ENCODE measurements at regions of chr15 and their contacts with region 1.

Region 1: GRCh38 chr15:60326824-60327654 is 70.7 kb downstream of the ANXA2 start:
- DNase-seq: peak; percentile 40
- H3K4me3 ChIP-seq: no peak overlapping the region; a peak in 1 of 4 replicates
- H3K27ac ChIP-seq: no peak overlapping the region
- H3K4me1 ChIP-seq: peaks cover 0 to 9% of the 10 kb centered on the region in 2 experiments; a peak in 2 of 4 replicates
- H3K27me3 ChIP-seq: peaks cover 28% of the 10 kb centered on the region; the same call in 1 of the 2 replicates
- CTCF ChIP-seq: peak; percentile 95
- EP300 ChIP-seq: no peak
- RAD21 ChIP-seq: peak; percentile 96

Region 2: DNA sequence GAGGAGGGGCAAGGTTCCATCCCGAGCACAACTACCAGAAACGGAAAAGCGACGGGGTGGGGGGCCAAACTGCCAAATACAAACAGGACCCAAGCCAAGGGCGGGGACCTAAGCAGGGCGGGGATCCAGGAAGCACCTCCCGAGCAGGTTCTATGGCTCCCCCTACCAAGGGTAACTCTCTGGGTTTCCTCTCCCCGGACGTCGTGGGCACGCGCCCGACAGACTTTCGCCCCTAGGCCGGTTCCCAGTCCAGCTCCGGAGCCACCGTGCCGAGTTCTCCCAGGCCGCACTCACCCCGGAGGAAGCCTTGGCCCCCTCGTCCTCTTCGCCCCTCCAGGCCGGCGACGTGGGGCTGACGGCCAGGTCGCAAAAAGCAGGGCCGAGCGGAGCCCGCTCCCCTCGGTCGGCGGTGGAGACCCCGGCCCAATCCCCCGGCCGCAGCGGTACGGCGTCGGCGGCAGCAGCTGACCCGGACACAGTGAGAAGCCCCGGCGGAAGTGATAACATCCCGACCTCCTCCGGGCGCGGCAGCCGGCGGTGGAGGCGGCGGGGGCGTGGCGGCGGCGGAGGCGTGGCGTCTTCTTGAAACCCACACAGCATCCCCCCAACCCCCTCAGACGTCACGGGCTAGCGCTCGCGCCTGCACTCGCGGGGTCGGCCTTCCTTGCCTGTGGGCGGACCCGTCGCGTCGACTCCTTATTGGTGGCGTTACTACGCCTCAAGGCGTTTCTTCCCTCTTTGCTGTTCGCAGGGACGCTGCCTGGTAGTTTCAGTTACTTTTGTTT is 638.0 kb before region 1 on chr15 and contains the start of gene BNIP2:
- CTCF ChIA-PET with region 1: interaction called, 32 read pairs
- POLR2A ChIA-PET with region 1: no interaction called
- DNase-seq: peak; percentile 96
- H3K4me3 ChIP-seq: peak within 1 kb of the TSS; percentile 81 to 86
- H3K27ac ChIP-seq: peak within 1 kb of the TSS; percentile 92 to 93
- H3K4me1 ChIP-seq: peaks cover 16 to 22% of the 10 kb centered on the region in 2 experiments; a peak in 3 of 4 replicates
- H3K27me3 ChIP-seq: no peaks in the 10 kb centered on the region
- CTCF ChIP-seq: 0 out of 2 replicates have a peak, but pooled peaks have one; percentile 6
- EP300 ChIP-seq: 0 out of 4 replicates have a peak, but pooled peaks of 1 of the 2 experiments have one; percentile 26
- RAD21 ChIP-seq: no peak
- polyA plus RNA-seq, gene BNIP2: 37.0 and 67.7 TPM in 2 replicates

Region 3: DNA sequence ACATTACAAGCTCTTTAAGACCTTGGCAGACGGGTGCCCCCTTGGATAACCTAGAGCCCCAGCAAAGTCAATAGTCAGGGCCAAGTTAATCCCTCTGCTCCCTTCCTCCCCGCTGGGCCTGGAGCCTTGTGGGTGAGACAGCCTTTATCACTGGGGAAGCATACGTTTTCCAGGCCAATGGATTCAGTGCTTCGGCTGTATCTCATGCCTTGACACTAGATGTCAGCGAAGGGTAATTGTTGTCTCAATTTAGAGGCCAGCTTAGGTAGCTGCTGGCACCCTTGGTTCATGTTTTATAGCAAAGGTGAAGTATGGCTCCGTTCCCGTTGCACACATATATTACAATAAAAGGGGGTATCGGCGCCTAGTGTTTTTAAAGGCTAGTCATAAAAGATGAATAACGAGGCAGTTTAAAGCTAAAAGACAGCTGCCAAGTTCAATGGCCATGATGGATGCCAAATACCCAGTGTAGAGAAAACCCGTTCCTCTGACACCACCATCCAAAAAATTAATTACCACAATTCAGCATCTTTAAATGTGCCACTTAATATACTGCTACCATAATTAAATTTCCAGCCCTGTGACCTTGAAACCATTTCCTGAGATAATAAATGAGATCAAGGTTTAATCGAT is 585.6 kb before region 1 on chr15:
- CTCF ChIA-PET with region 1: interaction called, 12 read pairs
- POLR2A ChIA-PET with region 1: no interaction called
- DNase-seq: peak; percentile 52
- H3K4me3 ChIP-seq: no peak overlapping the region
- H3K27ac ChIP-seq: no peak overlapping the region
- H3K4me1 ChIP-seq: no peaks in the 10 kb centered on the region; a peak in 1 of 4 replicates
- H3K27me3 ChIP-seq: no peaks in the 10 kb centered on the region; the same call in 1 of the 2 replicates
- CTCF ChIP-seq: no peak
- EP300 ChIP-seq: no peak
- RAD21 ChIP-seq: peak; percentile 73

Region 4: GRCh38 chr15:60315878-60316277 is 11.2 kb before region 1 on chr15:
- CTCF ChIA-PET with region 1: interaction called, 57 read pairs
- POLR2A ChIA-PET with region 1: no interaction called
- DNase-seq: no peak
- H3K4me3 ChIP-seq: no peak overlapping the region
- H3K27ac ChIP-seq: no peak overlapping the region
- H3K4me1 ChIP-seq: no peaks in the 10 kb centered on the region
- H3K27me3 ChIP-seq: peaks cover 9% of the 10 kb centered on the region; the same call in 1 of the 2 replicates
- CTCF ChIP-seq: no peak
- EP300 ChIP-seq: no peak
- RAD21 ChIP-seq: no peak

Region 5: DNA sequence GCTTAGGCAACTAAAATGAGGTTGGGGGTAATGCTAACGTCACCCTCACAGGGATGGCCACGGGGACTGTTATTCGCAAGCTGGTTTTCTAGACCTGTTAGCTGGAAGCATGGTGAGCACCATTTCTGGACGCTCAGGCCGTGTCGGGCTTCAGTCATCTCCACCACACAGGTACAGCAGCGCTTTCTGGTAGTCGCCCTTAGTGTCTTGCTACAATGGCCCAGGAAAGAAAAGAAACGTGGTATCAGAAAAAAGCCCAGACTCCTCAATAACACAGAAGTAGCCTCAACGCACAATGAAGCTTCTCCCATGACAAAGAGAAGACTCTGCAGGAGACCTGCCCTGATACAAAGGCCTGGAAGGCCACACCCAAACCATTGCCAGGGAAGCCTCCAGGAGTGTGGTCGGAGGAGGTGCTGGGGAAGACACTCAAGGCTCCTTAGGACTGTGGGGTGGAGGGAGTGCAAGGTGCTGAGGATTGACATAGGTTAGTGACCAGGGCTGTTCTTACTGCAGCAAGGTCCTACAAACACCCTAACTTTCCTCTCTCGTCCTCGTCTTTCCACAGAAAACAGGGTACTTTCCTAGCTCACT is 20.5 kb after region 1 on chr15:
- CTCF ChIA-PET with region 1: interaction called, 31 read pairs
- POLR2A ChIA-PET with region 1: no interaction called
- DNase-seq: no peak
- H3K4me3 ChIP-seq: no peak overlapping the region
- H3K27ac ChIP-seq: peak overlapping the region in 1 of 2 experiments; percentile 49; a peak in 2 of 4 replicates
- H3K4me1 ChIP-seq: peaks cover 4 to 9% of the 10 kb centered on the region in 2 experiments; a peak in 2 of 4 replicates
- H3K27me3 ChIP-seq: no peaks in the 10 kb centered on the region
- CTCF ChIP-seq: no peak
- EP300 ChIP-seq: no peak
- RAD21 ChIP-seq: no peak

Region 6: GRCh38 chr15:60444289-60444912 is 117.4 kb after region 1 on chr15:
- CTCF ChIA-PET with region 1: interaction called, 10 read pairs
- POLR2A ChIA-PET with region 1: no interaction called
- DNase-seq: peak; percentile 10
- H3K4me3 ChIP-seq: no peak overlapping the region
- H3K27ac ChIP-seq: peak overlapping the region in 1 of 2 experiments; percentile 19; a peak in 1 of 4 replicates
- H3K4me1 ChIP-seq: peaks cover 5 to 6% of the 10 kb centered on the region in 2 experiments; a peak in 3 of 4 replicates
- H3K27me3 ChIP-seq: no peaks in the 10 kb centered on the region
- CTCF ChIP-seq: peak; percentile 82
- EP300 ChIP-seq: no peak
- RAD21 ChIP-seq: peak; percentile 68

Region 7: GRCh38 chr15:60643555-60643954 is 316.5 kb after region 1 on chr15:
- CTCF ChIA-PET with region 1: no interaction called
- POLR2A ChIA-PET with region 1: no interaction called
- DNase-seq: no peak
- H3K4me3 ChIP-seq: no peak overlapping the region
- H3K27ac ChIP-seq: no peak overlapping the region
- H3K4me1 ChIP-seq: no peaks in the 10 kb centered on the region
- H3K27me3 ChIP-seq: no peaks in the 10 kb centered on the region
- CTCF ChIP-seq: no peak
- EP300 ChIP-seq: no peak
- RAD21 ChIP-seq: no peak

Region 8: GRCh38 chr15:60660290-60661051 is 333.4 kb after region 1 on chr15:
- CTCF ChIA-PET with region 1: no interaction called
- POLR2A ChIA-PET with region 1: no interaction called
- DNase-seq: peak; percentile 35
- H3K4me3 ChIP-seq: no peak overlapping the region
- H3K27ac ChIP-seq: peak overlapping the region; percentile 51 to 86
- H3K4me1 ChIP-seq: peaks cover 11 to 17% of the 10 kb centered on the region in 2 experiments
- H3K27me3 ChIP-seq: no peaks in the 10 kb centered on the region
- CTCF ChIP-seq: no peak
- EP300 ChIP-seq: peak in 1 of 2 experiments; percentile 75; a peak in 1 of 4 replicates
- RAD21 ChIP-seq: 0 out of 2 replicates have a peak, but pooled peaks have one; percentile 11

Region 9: DNA sequence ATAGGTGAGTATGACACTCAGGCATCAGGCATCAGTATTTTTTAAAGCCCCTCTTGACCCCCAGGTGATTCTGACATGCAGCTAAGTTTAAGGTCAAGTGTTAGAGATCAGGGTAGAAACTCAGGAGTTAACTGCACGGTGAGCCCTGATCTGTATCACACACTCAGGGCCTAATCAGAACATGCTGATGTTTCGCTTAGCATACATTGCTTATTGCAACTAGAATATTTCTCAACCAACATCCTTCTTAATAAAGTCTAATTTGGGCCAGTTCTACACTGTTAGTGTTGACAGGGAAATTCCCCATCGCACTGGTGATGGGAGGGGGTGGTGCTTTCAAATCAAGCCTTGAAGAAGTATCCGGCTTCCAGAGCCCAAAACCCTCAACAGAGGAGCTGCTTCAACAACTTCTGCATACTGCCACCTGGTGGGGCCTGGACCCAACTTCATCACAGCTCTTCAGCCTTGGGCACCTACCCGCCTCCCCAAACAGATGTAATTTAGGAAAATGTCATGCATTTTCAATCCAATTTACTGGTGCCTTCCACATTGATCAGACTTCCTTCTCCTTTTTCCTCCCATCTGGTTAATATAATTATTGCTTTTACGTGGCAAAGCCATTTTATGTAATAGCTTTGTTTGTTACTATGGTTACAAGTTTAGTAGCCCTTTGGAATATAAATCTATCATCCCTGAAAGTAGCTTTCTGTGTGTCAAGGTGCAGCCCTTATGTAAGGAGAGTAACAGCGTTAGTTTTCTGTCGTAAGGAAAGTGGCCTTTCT is 589.8 kb after region 1 on chr15:
- CTCF ChIA-PET with region 1: no interaction called
- POLR2A ChIA-PET with region 1: no interaction called
- DNase-seq: peak; percentile 73
- H3K4me3 ChIP-seq: no peak overlapping the region; a peak in 1 of 4 replicates
- H3K27ac ChIP-seq: no peak overlapping the region
- H3K4me1 ChIP-seq: peaks cover 0 to 4% of the 10 kb centered on the region in 2 experiments; a peak in 1 of 4 replicates
- H3K27me3 ChIP-seq: no peaks in the 10 kb centered on the region
- CTCF ChIP-seq: peak; percentile 83
- EP300 ChIP-seq: no peak
- RAD21 ChIP-seq: peak; percentile 89